Activated CD4-positive, alpha-beta T cell treated with anti-CD3 and anti-CD28 coated beads for 36 hours (primary cell): ENCODE measurements at regions of chr12 and their contacts with region 1.

Region 1: DNA sequence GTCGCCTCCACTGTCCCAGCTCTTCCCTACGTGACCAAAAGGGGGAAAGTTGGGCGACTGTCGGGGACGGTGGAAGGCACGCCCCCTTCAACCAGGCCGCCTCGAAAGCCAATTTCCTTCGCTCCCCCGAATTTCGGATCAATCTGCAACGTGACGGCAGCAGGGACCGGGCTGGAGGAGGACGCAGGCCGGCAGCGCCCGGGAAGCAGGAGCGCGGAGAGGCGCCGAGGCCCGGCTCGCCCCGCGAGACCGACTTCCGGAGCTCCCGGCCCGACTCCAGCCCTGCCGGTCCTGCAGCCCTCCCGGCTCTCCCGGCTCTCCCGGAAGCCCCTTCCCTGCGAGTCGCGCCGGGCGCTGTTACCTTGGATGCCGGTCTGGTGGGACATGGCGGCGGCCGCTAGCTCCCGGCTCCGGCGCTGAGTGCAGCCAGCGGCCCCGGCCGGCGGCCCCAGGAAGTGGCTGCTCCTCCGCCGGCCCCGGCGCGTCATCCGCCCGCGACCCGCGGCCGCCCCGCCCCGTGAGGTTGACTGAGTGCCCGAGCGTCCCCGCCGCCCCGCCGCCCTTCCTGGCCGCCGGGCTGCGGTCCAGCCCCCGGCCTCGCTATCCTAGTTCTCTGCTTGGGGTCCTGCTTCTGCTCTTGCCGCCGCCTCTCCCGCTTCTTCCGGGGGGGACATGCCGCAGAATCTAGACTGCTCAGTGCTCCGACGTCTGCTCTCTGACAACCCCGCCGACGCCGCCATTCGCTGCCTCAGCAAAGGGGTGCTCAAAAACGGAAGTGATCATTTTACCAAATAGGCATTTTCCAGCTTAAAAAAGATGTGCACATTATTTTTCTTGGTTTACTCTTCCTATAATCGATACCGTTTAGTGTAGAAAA is at the start of gene TWF1:
- DNase-seq: peak; percentile 93
- ATAC-seq: peak; percentile 94
- H3K4me3 Mint-ChIP-seq: peak within 1 kb of the TSS; percentile 88
- H3K27ac Mint-ChIP-seq: peak within 1 kb of the TSS; percentile 100
- H3K4me1 Mint-ChIP-seq: peaks cover 28% of the 10 kb centered on the region
- H3K27me3 Mint-ChIP-seq: no peaks in the 10 kb centered on the region
- total RNA-seq, gene TWF1: 15.5 to 17.4 TPM

Region 2: GRCh38 chr12:43816168-43816567 is 10.1 kb after region 1 on chr12:
- CTCF ChIA-PET with region 1: interaction called, 12 read pairs
- POLR2A ChIA-PET with region 1: no interaction called
- intact Hi-C with region 1: no loop called
- DNase-seq: no peak
- ATAC-seq: peak; percentile 70
- H3K4me3 Mint-ChIP-seq: no peak overlapping the region
- H3K27ac Mint-ChIP-seq: no peak overlapping the region
- H3K4me1 Mint-ChIP-seq: peaks cover 7% of the 10 kb centered on the region
- H3K27me3 Mint-ChIP-seq: peaks cover 6% of the 10 kb centered on the region

Region 3: GRCh38 chr12:43835656-43836474 is 29.8 kb after region 1 on chr12 and contains the start of gene TMEM117:
- CTCF ChIA-PET with region 1: interaction called, 10 read pairs
- POLR2A ChIA-PET with region 1: interaction called, 4 read pairs
- intact Hi-C with region 1: loop called (anchors 1 to 2 kb)
- DNase-seq: peak; percentile 69
- ATAC-seq: peak; percentile 63
- H3K4me3 Mint-ChIP-seq: peak within 1 kb of the TSS; percentile 80
- H3K27ac Mint-ChIP-seq: peak within 1 kb of the TSS; percentile 83
- H3K4me1 Mint-ChIP-seq: peaks cover 45% of the 10 kb centered on the region
- H3K27me3 Mint-ChIP-seq: no peaks in the 10 kb centered on the region
- total RNA-seq, gene TMEM117: 1.4 TPM

Region 4: DNA sequence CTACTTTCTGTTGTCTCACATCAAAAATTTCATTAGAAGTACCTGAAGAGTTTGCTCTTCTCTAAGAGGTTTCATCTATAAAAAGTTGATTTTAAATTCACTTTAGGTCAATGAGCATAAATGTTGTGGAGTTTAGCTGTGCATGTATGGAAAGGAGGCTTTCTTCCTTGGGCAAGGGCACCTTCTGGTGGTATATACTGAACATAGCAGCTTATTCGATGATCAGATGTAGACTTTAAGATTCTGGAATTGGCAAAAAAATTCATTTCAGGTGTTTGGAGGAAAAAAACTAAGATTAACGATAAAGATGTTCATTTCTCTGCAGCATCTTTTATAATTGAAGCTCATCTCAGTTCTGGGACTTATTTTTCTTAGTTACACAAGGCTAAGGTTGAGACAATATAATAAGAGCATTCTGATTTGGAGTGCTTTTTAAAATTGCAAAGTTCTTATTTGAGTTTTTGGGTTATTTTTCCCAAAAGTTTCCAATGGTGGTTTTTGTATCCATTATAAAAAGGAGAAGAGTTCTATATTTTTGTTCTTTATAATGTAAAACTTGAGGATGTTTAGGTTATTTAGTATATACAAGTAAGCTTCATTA is 76.6 kb after region 1 on chr12:
- CTCF ChIA-PET with region 1: interaction called, 10 read pairs
- POLR2A ChIA-PET with region 1: no interaction called
- intact Hi-C with region 1: loop called (anchors 1 to 5 kb)
- DNase-seq: peak; percentile 27
- ATAC-seq: peak; percentile 65
- H3K4me3 Mint-ChIP-seq: no peak overlapping the region
- H3K27ac Mint-ChIP-seq: no peak overlapping the region
- H3K4me1 Mint-ChIP-seq: no peaks in the 10 kb centered on the region
- H3K27me3 Mint-ChIP-seq: no peaks in the 10 kb centered on the region

Region 5: DNA sequence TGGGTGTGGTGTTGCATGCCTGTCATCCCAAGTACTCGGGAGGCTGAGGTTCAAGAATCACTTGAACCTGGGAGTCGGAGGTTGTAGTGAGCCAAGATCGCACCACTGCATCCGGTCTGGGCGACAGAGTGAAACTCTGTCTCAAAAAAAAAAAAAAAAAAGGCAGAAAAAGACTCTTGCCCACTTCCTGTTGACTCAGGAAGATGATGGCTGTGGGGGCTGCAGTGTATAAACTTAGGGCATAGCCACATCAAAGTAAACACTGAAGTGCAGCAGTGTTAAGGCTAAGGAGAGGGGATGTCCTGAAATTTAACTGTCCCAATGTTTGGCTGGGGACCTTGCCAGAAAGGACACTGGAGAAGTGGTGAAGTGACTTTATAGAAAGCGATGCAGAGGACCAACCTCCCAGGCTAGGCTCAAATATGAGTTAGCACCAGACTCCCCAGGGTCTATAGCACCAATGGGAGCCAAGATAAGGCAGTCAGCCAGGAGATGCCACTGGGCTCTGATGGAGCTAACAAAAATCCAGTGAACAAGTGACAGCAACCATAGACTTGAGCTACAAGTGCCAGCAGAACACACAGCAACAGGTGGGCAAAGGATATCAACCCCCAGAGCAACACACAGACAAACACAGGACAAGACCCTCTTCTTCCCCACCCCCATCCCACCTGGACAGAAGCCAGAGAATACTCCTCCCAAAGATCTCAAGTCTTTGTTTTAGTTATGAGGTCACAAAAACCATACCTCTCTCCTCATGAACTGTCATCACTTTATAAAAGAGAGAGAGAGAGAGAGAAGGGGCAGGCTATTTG is 1042.0 kb after region 1 on chr12:
- CTCF ChIA-PET with region 1: no interaction called
- POLR2A ChIA-PET with region 1: no interaction called
- intact Hi-C with region 1: loop called in 1 of 2 experiments (anchors 10 kb)
- DNase-seq: peak; percentile 78
- ATAC-seq: peak; percentile 86
- H3K4me3 Mint-ChIP-seq: peak overlapping the region; percentile 59
- H3K27ac Mint-ChIP-seq: peak overlapping the region; percentile 96
- H3K4me1 Mint-ChIP-seq: peaks cover 80% of the 10 kb centered on the region
- H3K27me3 Mint-ChIP-seq: no peaks in the 10 kb centered on the region